ENCODE measurements at regions of chr5 and their contacts with region 1.

Region 1: DNA sequence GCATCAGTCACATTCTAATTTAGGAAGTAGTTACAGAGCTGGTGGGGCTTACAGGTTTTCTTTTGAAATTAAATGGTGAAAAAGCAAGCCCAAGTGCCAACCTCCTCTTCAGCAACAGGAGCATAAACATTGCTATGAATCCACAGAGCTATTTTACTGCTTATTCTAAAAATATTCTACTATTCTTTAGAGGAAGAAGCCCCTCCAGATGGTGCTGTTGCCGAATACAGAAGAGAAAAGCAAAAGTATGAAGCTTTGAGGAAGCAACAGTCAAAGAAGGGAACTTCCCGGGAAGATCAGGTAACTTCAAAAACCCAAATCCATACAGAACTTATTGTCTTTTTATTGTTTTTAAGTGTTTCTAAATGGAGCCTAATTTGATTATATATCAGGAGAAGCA is 202.8 kb downstream of the CWC27 start:
- DNase-seq: no peak
- ATAC-seq: peak; percentile 60
- H3K4me3 ChIP-seq: no peak overlapping the region
- H3K27ac ChIP-seq: no peak overlapping the region
- H3K4me1 ChIP-seq: no peaks in the 10 kb centered on the region
- H3K27me3 ChIP-seq: no peaks in the 10 kb centered on the region
- CTCF ChIP-seq: peak in 2 of 3 experiments; percentile 27 to 47; a peak in 3 of 6 replicates
- EP300 ChIP-seq: no peak
- POLR2A ChIP-seq: no peak
- RAD21 ChIP-seq: peak; percentile 81

Region 2: DNA sequence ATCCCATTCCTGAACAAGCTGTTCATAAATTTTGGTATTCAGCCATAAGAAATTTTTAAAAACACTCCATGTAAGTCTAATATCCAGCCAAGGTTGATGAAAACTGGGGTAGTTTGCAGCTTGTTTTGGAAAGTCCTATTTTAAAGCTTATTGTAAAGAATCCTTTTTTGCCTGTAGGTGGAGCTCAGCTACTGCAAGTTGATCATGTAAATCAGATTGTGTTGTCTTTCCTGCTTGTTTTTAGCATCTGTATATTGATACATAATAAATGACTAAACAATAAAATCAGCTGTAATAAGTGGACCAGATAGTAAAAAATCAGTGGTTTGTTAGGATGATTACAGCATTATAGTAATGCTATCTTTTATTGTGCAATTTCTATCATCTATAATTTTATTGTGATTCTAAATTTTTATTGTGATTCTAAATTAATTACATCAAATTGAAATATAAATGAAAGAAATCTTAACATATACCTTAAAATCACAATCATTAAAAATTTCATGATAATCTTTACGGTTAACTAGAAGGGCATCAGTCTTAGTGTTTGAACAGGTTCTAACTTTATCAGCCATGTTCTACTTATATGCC is 160.4 kb before region 1 on chr5:
- CTCF ChIA-PET with region 1: interaction called, 7 read pairs
- POLR2A ChIA-PET with region 1: no interaction called
- RAD21 ChIA-PET with region 1: interaction called, 8 read pairs
- SMC1A ChIA-PET with region 1: interaction called, 12 read pairs
- in situ Hi-C with region 1: no loop called
- intact Hi-C with region 1: no loop called
- DNase-seq: peak; percentile 5
- ATAC-seq: peak; percentile 69
- H3K4me3 ChIP-seq: no peak overlapping the region
- H3K27ac ChIP-seq: no peak overlapping the region
- H3K4me1 ChIP-seq: peaks cover 12% of the 10 kb centered on the region
- H3K27me3 ChIP-seq: no peaks in the 10 kb centered on the region
- CTCF ChIP-seq: peak; percentile 54 to 72 (median 56); a peak in 5 of 6 replicates
- EP300 ChIP-seq: no peak
- POLR2A ChIP-seq: no peak
- RAD21 ChIP-seq: peak; percentile 92

Region 3: DNA sequence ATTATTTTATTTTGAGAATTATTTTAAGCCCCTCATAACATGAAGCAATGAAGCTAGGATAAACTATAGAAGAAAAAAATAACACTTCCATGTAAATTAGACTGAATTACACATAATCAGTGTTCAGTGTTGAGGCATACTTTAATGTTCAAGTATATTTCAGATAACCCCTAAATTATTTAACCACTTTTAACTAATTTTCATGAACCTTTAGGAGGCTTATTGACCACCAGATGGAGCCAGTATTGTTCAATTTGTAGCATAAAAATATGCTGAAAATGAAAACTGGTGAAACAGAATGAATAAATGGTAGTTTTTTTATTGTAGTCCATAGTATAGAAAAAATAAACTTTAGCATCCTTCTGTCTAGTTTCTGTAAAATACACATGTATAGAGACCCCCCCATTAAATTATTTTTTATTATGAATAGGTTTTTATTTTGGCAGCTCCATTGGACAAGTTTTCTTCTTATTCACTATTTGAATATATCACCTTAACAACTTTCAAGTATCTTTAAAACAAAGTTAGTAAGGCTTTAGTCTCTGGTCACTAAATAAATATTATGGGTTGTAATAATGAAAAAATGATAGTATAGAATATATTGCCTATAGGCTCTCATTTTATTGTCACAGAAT is 12.6 kb before region 1 on chr5:
- CTCF ChIA-PET with region 1: interaction called, 19 read pairs
- POLR2A ChIA-PET with region 1: no interaction called
- RAD21 ChIA-PET with region 1: interaction called, 4 read pairs
- SMC1A ChIA-PET with region 1: interaction called, 20 read pairs
- in situ Hi-C with region 1: no loop called
- intact Hi-C with region 1: no loop called
- DNase-seq: no peak
- ATAC-seq: peak; percentile 61
- H3K4me3 ChIP-seq: no peak overlapping the region
- H3K27ac ChIP-seq: no peak overlapping the region
- H3K4me1 ChIP-seq: no peaks in the 10 kb centered on the region
- H3K27me3 ChIP-seq: no peaks in the 10 kb centered on the region
- CTCF ChIP-seq: peak in 2 of 3 experiments; percentile 36 to 49; a peak in 4 of 6 replicates
- EP300 ChIP-seq: no peak
- POLR2A ChIP-seq: no peak
- RAD21 ChIP-seq: peak; percentile 86

Region 4: DNA sequence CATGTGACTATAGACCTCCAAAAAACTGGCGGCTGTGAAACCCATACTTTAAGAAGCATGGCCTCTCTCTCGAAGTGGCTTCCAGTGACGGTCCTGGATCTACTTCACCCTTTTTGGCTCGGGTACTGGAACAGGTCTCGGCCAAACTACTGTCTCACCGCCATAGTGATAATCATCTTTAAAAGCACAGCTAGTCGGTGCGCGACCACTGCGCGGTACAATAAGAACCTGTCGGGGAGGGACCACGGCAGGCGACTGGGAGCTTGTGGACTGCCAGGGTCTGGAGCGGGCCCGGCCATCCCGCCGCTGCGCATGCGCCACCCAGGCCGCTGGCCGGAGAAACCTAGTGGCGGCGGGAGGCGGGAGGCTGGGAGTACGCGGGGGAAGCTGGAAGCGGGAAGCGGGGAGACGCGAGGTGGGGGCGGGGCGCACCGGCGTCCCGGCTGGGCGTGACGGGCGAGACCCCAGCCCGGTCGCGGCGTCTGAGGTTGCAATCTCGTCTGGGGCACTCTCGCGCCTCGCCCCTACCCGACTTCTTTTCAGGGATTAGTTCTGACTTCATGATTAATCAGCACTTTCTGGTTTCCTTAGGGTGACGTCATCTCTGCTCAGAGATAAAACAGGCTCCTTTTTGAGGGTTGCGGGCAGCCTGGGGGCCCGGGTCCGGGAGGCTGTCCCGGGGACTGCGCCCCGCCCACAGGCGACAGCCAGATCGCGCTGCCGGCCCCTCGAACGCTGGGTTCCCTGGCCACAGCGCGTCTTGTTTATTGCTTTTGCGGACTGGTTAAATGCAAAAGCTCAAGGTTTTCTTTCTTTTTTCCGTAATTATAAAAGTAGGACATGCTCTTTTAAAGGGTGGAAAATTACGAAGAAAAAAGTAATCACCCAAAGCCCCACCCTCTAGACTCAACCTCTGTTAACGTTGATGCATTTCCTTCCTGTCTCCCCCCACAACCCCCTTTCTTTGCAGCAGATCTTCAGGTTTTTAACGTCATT is 64.0 kb after region 1 on chr5:
- CTCF ChIA-PET with region 1: interaction called, 11 read pairs
- POLR2A ChIA-PET with region 1: no interaction called
- RAD21 ChIA-PET with region 1: interaction called, 11 read pairs
- SMC1A ChIA-PET with region 1: interaction called, 5 read pairs
- in situ Hi-C with region 1: no loop called
- intact Hi-C with region 1: no loop called
- DNase-seq: peak; percentile 40
- ATAC-seq: peak; percentile 89
- H3K4me3 ChIP-seq: peak overlapping the region; percentile 70
- H3K27ac ChIP-seq: peak overlapping the region; percentile 90
- H3K4me1 ChIP-seq: peaks cover 15% of the 10 kb centered on the region
- H3K27me3 ChIP-seq: no peaks in the 10 kb centered on the region
- CTCF ChIP-seq: no peak
- EP300 ChIP-seq: peak in 1 of 2 experiments; percentile 42; a peak in 1 of 4 replicates
- POLR2A ChIP-seq: peak; percentile 79
- RAD21 ChIP-seq: 0 out of 2 replicates have a peak, but pooled peaks have one; percentile 1

Region 5: GRCh38 chr5:65047948-65048690 is 76.6 kb after region 1 on chr5:
- CTCF ChIA-PET with region 1: interaction called, 8 read pairs
- POLR2A ChIA-PET with region 1: no interaction called
- RAD21 ChIA-PET with region 1: interaction called, 7 read pairs
- SMC1A ChIA-PET with region 1: interaction called, 15 read pairs
- in situ Hi-C with region 1: no loop called
- intact Hi-C with region 1: no loop called
- DNase-seq: peak; percentile 71
- ATAC-seq: peak; percentile 86
- H3K4me3 ChIP-seq: no peak overlapping the region; the same call in 1 of the 2 replicates
- H3K27ac ChIP-seq: peak overlapping the region; percentile 87
- H3K4me1 ChIP-seq: peaks cover 60% of the 10 kb centered on the region
- H3K27me3 ChIP-seq: no peaks in the 10 kb centered on the region
- CTCF ChIP-seq: no peak
- EP300 ChIP-seq: peak in 1 of 2 experiments; percentile 54; a peak in 1 of 4 replicates
- POLR2A ChIP-seq: no peak
- RAD21 ChIP-seq: 0 out of 2 replicates have a peak, but pooled peaks have one; percentile 1

Region 6: DNA sequence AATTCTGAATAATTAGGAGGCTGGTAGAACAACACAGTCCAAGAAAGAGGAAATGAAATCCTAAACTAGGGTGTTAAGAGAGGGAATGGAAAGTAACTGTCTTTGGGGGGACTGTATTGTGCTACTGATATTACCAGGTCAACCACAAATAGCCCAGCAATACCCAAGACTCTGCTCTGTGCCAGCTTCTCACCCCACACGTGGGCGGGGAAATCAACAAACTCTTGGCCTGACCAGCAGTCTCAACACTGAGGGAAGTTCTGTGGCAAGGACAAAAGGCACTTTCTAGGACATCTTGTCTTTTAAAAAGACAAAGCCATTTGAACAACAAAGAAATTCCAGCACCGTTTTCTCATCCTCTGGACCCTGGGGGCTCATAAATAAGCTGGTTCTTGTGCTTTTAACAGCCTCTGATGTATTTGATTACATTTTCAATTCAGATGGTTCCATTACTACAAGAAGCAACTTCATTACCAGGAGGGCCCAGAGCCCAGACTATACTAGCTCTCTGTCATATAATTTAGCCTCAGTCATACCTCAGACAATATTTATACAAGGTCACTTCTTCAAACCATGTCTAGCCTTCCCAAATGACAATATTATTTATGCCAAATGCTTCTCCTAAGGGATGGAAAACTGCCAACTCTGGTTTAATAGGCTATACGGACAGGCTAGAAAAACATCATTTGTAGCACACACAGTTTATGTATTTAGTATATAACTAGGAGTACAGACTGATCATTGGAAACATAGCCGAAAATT is 95.1 kb after region 1 on chr5:
- CTCF ChIA-PET with region 1: interaction called, 8 read pairs
- POLR2A ChIA-PET with region 1: no interaction called
- RAD21 ChIA-PET with region 1: interaction called, 19 read pairs
- SMC1A ChIA-PET with region 1: interaction called, 20 read pairs
- in situ Hi-C with region 1: no loop called
- intact Hi-C with region 1: loop called (anchors 10 kb)
- DNase-seq: peak; percentile 92
- ATAC-seq: peak; percentile 77
- H3K4me3 ChIP-seq: no peak overlapping the region
- H3K27ac ChIP-seq: peak overlapping the region; percentile 77
- H3K4me1 ChIP-seq: peaks cover 64% of the 10 kb centered on the region
- H3K27me3 ChIP-seq: no peaks in the 10 kb centered on the region
- CTCF ChIP-seq: no peak
- EP300 ChIP-seq: peak; percentile 78 to 92
- POLR2A ChIP-seq: no peak
- RAD21 ChIP-seq: no peak

Region 7: DNA sequence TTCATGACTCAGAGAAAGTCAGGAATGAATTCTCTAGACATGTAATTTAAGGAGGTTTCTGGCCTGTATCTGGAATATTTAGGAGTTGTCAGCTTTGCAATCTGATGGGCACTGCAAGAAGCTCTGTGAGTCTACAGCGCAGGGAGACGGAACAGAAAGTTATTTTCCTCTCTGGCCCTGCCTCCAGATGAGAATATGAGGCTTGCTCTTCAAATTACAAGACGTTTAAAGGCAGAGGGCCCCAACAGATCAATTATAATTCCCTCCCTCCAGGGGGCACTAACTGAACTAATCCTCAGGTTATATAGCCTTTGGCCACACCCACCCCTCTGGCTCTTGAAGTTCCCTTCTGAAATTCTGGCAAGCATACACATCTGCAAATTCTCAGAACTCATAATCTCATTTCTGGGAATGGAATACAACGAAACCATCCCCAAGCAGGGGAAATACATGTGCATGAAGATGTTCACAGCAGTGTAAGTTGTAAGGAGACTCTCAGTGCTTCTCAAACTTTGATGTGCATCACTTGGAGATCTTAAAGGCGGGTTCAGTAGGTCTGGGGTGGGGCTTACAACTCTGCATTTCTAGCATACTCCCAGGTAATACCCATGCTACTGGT is 104.8 kb after region 1 on chr5:
- CTCF ChIA-PET with region 1: interaction called, 8 read pairs
- POLR2A ChIA-PET with region 1: no interaction called
- RAD21 ChIA-PET with region 1: interaction called, 19 read pairs
- SMC1A ChIA-PET with region 1: interaction called, 20 read pairs
- in situ Hi-C with region 1: no loop called
- intact Hi-C with region 1: no loop called
- DNase-seq: no peak
- ATAC-seq: peak; percentile 93
- H3K4me3 ChIP-seq: no peak overlapping the region
- H3K27ac ChIP-seq: no peak overlapping the region
- H3K4me1 ChIP-seq: peaks cover 17% of the 10 kb centered on the region
- H3K27me3 ChIP-seq: no peaks in the 10 kb centered on the region
- CTCF ChIP-seq: peak; percentile 35 to 54 (median 43)
- EP300 ChIP-seq: no peak
- POLR2A ChIP-seq: no peak
- RAD21 ChIP-seq: peak; percentile 66

Region 8: DNA sequence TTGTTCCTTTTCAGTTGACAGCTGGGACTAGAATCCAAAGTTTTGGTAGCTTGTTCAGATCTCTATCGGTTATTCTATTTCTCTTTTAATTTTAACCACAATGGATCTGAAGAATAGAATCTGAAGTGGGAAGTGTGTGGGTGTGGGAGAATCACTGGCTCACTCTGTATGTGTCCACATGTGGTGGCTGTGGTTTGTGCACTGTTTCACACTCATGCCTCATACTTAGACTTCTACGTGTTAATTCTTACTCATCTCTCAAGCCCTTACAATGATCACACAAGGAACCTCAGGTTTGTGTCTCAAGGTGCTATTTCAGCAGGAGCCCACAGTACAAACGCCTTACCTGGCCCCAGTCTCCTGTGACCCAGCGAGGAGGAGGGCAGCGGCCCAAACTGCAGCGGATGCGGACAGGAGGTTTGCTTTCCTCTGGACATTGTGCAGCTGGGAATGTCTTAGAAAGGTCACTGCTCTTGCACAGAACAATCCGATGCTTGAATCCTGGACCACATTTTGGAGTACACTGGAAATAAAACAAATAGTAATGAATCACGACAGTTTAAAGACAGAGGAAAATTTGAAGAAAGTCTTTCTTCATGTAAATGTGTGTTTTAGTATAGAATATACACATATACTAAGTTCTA is 201.1 kb after region 1 on chr5:
- CTCF ChIA-PET with region 1: no interaction called
- POLR2A ChIA-PET with region 1: no interaction called
- RAD21 ChIA-PET with region 1: no interaction called
- SMC1A ChIA-PET with region 1: no interaction called
- in situ Hi-C with region 1: no loop called
- intact Hi-C with region 1: no loop called
- DNase-seq: peak; percentile 48
- ATAC-seq: peak; percentile 99
- H3K4me3 ChIP-seq: no peak overlapping the region
- H3K27ac ChIP-seq: no peak overlapping the region
- H3K4me1 ChIP-seq: peaks cover 3% of the 10 kb centered on the region; the same call in 1 of the 2 replicates
- H3K27me3 ChIP-seq: no peaks in the 10 kb centered on the region
- CTCF ChIP-seq: no peak
- EP300 ChIP-seq: peak; percentile 14 to 68; a peak in 3 of 4 replicates
- POLR2A ChIP-seq: no peak
- RAD21 ChIP-seq: 0 out of 2 replicates have a peak, but pooled peaks have one; percentile 6

Measured in GM12878 (cell line).